Breast epithelium (tissue), 4 donors: ENCODE measurements at regions of chr5 and their contacts with region 1.

Region 1: GRCh38 chr5:21823588-21823987 is 1029.6 kb downstream of the CDH12 start:
- DNase-seq: no peak
- H3K4me3 ChIP-seq: no peak overlapping the region
- H3K27ac ChIP-seq: no peak overlapping the region
- H3K4me1 ChIP-seq: no peaks in the 10 kb centered on the region
- H3K27me3 ChIP-seq: no peaks in the 10 kb centered on the region
- CTCF ChIP-seq: no peak
- POLR2A ChIP-seq: no peak

Region 2: DNA sequence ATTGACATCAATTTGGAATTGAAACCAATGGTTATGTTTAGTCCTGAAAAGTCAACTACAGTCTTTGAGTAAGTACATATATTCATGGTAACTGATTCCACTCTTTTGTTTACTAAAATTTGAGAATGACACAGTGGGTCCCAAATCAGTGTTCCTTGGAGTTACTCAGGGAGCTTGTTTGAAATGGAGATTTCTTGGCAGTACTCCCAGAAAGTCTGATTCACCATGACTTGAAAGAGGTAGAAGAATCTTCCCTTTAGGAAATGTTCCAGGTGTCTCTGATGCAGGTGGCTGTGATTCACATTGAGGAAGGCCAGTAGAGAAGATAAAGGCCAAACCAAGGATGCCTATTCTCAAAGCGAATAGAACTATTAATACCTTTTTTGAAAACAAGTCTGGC is 48.8 kb before region 1 on chr5:
- intact Hi-C with region 1: loop called (anchors 2 kb)
- DNase-seq: no peak
- H3K4me3 ChIP-seq: no peak overlapping the region
- H3K27ac ChIP-seq: no peak overlapping the region
- H3K4me1 ChIP-seq: no peaks in the 10 kb centered on the region
- H3K27me3 ChIP-seq: no peaks in the 10 kb centered on the region
- CTCF ChIP-seq: no peak
- POLR2A ChIP-seq: no peak